CD8-positive, alpha-beta memory T cell (primary cell): ENCODE measurements at regions of chr6 and their contacts with region 1.

Region 1: GRCh38 chr6:134938896-134939295 is 11.0 kb downstream of the ALDH8A1 start:
- DNase-seq: peak in 2 of 5 donors; percentile 6 to 18
- H3K4me3 ChIP-seq: no peak overlapping the region
- H3K4me3 Mint-ChIP-seq: no peak overlapping the region
- H3K27ac ChIP-seq: no peak overlapping the region
- H3K27ac Mint-ChIP-seq: no peak overlapping the region
- H3K4me1 ChIP-seq: peaks cover 5% of the 10 kb centered on the region
- H3K4me1 Mint-ChIP-seq: peaks cover 0 to 3% (median 2%) of the 10 kb centered on the region in 3 donors
- H3K27me3 ChIP-seq: no peaks in the 10 kb centered on the region
- H3K27me3 Mint-ChIP-seq: no peaks in the 10 kb centered on the region

Region 2: DNA sequence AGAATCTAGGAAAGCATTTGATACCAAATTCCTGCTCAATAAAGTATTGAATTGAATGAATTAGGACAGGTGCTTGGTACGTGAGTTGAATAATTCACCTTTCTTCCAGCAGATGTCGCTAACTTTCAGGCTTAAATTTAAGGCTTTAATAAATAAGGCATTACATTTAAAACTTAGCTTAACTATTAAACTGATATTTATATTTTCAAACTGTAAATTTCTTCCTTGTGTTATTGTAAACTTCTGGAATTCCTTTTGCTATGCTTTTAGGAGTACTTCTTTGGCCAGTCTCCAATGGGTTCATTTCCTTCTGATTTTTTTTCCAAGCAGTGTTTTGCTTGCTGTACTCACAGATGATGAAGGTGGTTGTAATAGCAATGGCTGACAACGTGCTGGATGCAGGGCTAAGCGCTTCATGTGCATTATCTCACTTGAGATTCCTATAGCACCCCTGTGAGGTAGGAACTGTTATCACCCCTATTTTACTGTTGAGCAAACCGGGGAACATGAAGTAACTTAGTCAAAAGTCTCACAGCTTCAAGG is 815.2 kb before region 1 on chr6:
- CTCF ChIA-PET with region 1: interaction called, 29 read pairs
- POLR2A ChIA-PET with region 1: no interaction called
- DNase-seq: peak in 3 of 5 donors; percentile 7 to 28 (median 18)
- H3K4me3 ChIP-seq: no peak overlapping the region
- H3K4me3 Mint-ChIP-seq: peak overlapping the region in 1 of 7 donors; percentile 54
- H3K27ac ChIP-seq: no peak overlapping the region
- H3K27ac Mint-ChIP-seq: peak overlapping the region in 2 of 8 donors; percentile 35 to 83
- H3K4me1 ChIP-seq: no peaks in the 10 kb centered on the region
- H3K4me1 Mint-ChIP-seq: peaks cover 0 to 4% (median 3%) of the 10 kb centered on the region in 3 donors
- H3K27me3 ChIP-seq: no peaks in the 10 kb centered on the region
- H3K27me3 Mint-ChIP-seq: peaks cover 1 to 11% of the 10 kb centered on the region in 2 donors

Region 3: GRCh38 chr6:134161036-134161435 is 777.9 kb before region 1 on chr6:
- CTCF ChIA-PET with region 1: interaction called, 25 read pairs
- POLR2A ChIA-PET with region 1: no interaction called
- DNase-seq: no peak
- H3K4me3 ChIP-seq: no peak overlapping the region
- H3K4me3 Mint-ChIP-seq: no peak overlapping the region
- H3K27ac ChIP-seq: no peak overlapping the region
- H3K27ac Mint-ChIP-seq: no peak overlapping the region
- H3K4me1 ChIP-seq: no peaks in the 10 kb centered on the region
- H3K4me1 Mint-ChIP-seq: no peaks in the 10 kb centered on the region
- H3K27me3 ChIP-seq: no peaks in the 10 kb centered on the region
- H3K27me3 Mint-ChIP-seq: peaks cover 0 to 9% of the 10 kb centered on the region in 2 donors

Region 4: GRCh38 chr6:134604014-134604676 is 334.8 kb before region 1 on chr6:
- CTCF ChIA-PET with region 1: no interaction called
- POLR2A ChIA-PET with region 1: no interaction called
- DNase-seq: no peak
- H3K4me3 ChIP-seq: no peak overlapping the region
- H3K4me3 Mint-ChIP-seq: no peak overlapping the region
- H3K27ac ChIP-seq: no peak overlapping the region
- H3K27ac Mint-ChIP-seq: no peak overlapping the region
- H3K4me1 ChIP-seq: no peaks in the 10 kb centered on the region
- H3K4me1 Mint-ChIP-seq: no peaks in the 10 kb centered on the region
- H3K27me3 ChIP-seq: no peaks in the 10 kb centered on the region
- H3K27me3 Mint-ChIP-seq: peaks cover 1 to 14% of the 10 kb centered on the region in 2 donors

Region 5: DNA sequence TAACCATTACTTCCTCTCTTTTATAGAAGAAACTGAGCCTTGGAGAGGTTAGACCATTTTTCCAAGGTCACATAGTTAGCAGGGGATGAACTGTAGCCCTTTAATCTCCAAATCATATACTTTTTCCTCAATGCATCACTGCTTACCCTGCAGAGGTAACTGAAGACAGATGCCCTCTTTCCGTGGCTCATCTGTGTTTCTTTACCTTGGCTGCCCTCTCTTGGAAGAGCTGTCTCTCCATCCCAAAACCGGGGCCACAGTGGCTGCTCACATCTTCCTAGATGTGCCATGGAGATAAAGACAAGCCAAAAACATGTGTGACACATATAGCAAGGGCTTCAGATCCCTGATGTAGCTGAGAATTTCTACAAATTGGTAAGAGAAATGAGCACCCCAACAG is 11.6 kb after region 1 on chr6:
- CTCF ChIA-PET with region 1: interaction called, 11 read pairs
- POLR2A ChIA-PET with region 1: no interaction called
- DNase-seq: no peak
- H3K4me3 ChIP-seq: no peak overlapping the region
- H3K4me3 Mint-ChIP-seq: no peak overlapping the region
- H3K27ac ChIP-seq: no peak overlapping the region
- H3K27ac Mint-ChIP-seq: no peak overlapping the region
- H3K4me1 ChIP-seq: no peaks in the 10 kb centered on the region
- H3K4me1 Mint-ChIP-seq: no peaks in the 10 kb centered on the region
- H3K27me3 ChIP-seq: no peaks in the 10 kb centered on the region
- H3K27me3 Mint-ChIP-seq: peaks cover 0 to 2% of the 10 kb centered on the region in 2 donors

Region 6: DNA sequence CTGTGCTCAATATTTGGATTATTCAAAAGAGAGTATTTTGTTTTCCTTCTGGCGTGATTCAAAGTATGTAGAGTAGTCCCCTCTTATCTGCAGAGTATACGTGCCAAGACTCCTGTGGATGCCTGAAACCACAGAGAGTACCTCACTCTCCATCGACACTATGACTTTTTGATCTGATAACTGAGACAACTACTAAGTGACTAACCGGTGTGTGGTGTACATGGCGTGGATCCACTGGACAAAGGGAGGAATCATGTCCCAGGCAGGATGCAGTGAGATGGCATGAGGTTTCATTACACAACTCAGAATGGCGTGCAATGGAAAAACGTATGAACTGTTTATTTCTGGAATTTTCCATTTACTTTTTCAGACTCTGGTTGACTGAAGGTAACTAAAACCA is 800.4 kb after region 1 on chr6:
- CTCF ChIA-PET with region 1: no interaction called
- POLR2A ChIA-PET with region 1: no interaction called
- DNase-seq: no peak
- H3K4me3 ChIP-seq: no peak overlapping the region
- H3K4me3 Mint-ChIP-seq: no peak overlapping the region
- H3K27ac ChIP-seq: no peak overlapping the region
- H3K27ac Mint-ChIP-seq: no peak overlapping the region
- H3K4me1 ChIP-seq: no peaks in the 10 kb centered on the region
- H3K4me1 Mint-ChIP-seq: no peaks in the 10 kb centered on the region
- H3K27me3 ChIP-seq: no peaks in the 10 kb centered on the region
- H3K27me3 Mint-ChIP-seq: peaks cover 8 to 15% of the 10 kb centered on the region in 2 donors